Right cardiac atrium (tissue), 5 donors: ENCODE measurements at regions of chr2 and their contacts with region 1.

Region 1: GRCh38 chr2:160952464-160953254 is 207.6 kb upstream of the TANK start:
- DNase-seq: peak; percentile 66 to 82 (median 81)
- ATAC-seq: peak; percentile 82
- H3K4me3 ChIP-seq: peak overlapping the region; percentile 18
- H3K27ac ChIP-seq: peak overlapping the region; percentile 37
- H3K4me1 ChIP-seq: peaks cover 4% of the 10 kb centered on the region
- H3K27me3 ChIP-seq: no peaks in the 10 kb centered on the region

Region 2: GRCh38 chr2:160365716-160366367 is 586.8 kb before region 1 on chr2:
- intact Hi-C with region 1: no loop called
- DNase-seq: peak; percentile 80 to 93 (median 88)
- ATAC-seq: peak; percentile 68 to 84
- H3K4me3 ChIP-seq: no peak overlapping the region
- H3K27ac ChIP-seq: no peak overlapping the region
- H3K4me1 ChIP-seq: peaks cover 21% of the 10 kb centered on the region
- H3K27me3 ChIP-seq: no peaks in the 10 kb centered on the region

Region 3: DNA sequence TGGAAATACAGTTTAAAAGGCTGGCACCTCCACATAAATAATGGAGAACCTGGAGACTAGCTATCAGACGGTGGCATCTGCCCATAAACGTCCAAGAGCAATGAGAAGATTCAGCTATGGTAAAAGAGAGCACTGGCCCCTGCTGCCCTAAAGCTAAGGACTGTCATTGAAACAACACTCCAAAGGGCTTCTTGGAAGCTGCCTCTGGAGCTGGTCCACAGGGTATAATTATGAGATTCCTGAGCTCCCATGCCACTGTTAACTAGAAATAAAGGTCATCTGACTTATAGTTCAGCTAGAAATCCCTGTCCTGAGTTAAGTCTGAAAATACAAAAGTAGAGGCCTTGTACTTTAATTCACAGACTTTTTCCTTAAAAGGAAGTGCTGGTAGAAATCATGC is 419.2 kb before region 1 on chr2:
- intact Hi-C with region 1: no loop called
- DNase-seq: no peak
- ATAC-seq: peak; percentile 60 to 61
- H3K4me3 ChIP-seq: no peak overlapping the region
- H3K27ac ChIP-seq: no peak overlapping the region
- H3K4me1 ChIP-seq: peaks cover 2% of the 10 kb centered on the region
- H3K27me3 ChIP-seq: no peaks in the 10 kb centered on the region

Region 4: DNA sequence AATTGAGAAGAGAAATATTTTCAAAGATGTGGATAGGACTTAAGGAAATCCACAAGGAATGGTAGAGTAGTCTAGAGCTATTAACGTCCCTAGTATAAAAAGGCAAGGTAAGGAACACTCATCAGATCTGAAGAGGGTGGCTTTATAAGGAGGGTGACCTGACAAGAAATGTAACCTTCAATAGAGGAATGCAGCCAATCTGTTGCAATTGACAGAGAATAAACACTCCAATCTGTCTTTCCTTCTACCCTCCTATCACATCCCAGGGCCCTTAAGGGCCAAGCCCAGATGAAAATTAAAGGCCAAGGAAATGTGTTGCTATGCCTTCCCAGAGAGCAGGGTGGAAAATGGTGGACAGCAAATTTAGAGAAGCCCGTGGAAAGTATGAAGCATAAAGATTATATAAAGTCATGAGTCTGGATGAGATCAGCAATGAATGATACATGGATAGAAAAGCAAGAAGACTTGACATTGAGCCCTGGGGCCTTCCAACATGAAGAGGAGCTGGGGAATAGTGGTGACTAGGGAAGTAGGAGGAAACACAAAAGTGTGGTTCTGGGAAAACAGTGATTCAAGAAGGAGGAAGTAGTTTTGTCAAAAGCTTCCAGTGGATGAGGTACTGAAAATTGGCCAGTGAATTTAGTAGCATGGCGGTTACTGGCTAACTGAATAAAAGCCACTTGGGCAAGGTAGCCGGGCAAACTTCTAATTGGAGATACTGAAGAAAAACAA is 63.1 kb before region 1 on chr2:
- intact Hi-C with region 1: loop called in 1 of 4 experiments (anchors 10 kb)
- DNase-seq: no peak
- ATAC-seq: no peak
- H3K4me3 ChIP-seq: no peak overlapping the region
- H3K27ac ChIP-seq: no peak overlapping the region
- H3K4me1 ChIP-seq: no peaks in the 10 kb centered on the region
- H3K27me3 ChIP-seq: no peaks in the 10 kb centered on the region